ENCODE measurements at regions of chr19 and their contacts with region 1.

Region 1: GRCh38 chr19:1672038-1672768 is 19.8 kb upstream of the TCF3 start:
- DNase-seq: peak; percentile 78
- CTCF ChIP-seq: peak; percentile 87

Region 2: GRCh38 chr19:1592024-1592754 is 80.0 kb before region 1 on chr19:
- CTCF ChIA-PET with region 1: interaction called, 16 read pairs
- POLR2A ChIA-PET with region 1: no interaction called
- DNase-seq: peak; percentile 97
- CTCF ChIP-seq: no peak

Region 3: GRCh38 chr19:1605236-1606137 is 66.7 kb before region 1 on chr19 and contains the start of gene UQCR11:
- CTCF ChIA-PET with region 1: interaction called, 19 read pairs
- POLR2A ChIA-PET with region 1: no interaction called
- DNase-seq: peak; percentile 97
- CTCF ChIP-seq: peak; percentile 67

Region 4: GRCh38 chr19:1652471-1653299 is 19.5 kb before region 1 on chr19 and contains the start of gene TCF3:
- CTCF ChIA-PET with region 1: interaction called, 36 read pairs
- POLR2A ChIA-PET with region 1: interaction called, 3 read pairs
- DNase-seq: peak; percentile 98
- CTCF ChIP-seq: no peak

Region 5: GRCh38 chr19:1794424-1795172 is 122.4 kb after region 1 on chr19:
- CTCF ChIA-PET with region 1: interaction called, 17 read pairs
- POLR2A ChIA-PET with region 1: no interaction called
- DNase-seq: no peak
- CTCF ChIP-seq: no peak